Activated B cell treated with CpG ODN at 0.5 μM for 24 hours (primary cell): ENCODE measurements at regions of chr15 and their contacts with region 1.

Region 1: GRCh38 chr15:64153480-64154367 is 2.2 kb downstream of the SNX22 start:
- DNase-seq: peak; percentile 92
- ATAC-seq: peak; percentile 80
- H3K4me3 Mint-ChIP-seq: peak overlapping the region; percentile 86
- H3K27ac Mint-ChIP-seq: peak overlapping the region; percentile 91
- H3K4me1 Mint-ChIP-seq: peaks cover 69% of the 10 kb centered on the region
- H3K27me3 Mint-ChIP-seq: no peaks in the 10 kb centered on the region
- CTCF ChIP-seq: peak; percentile 61

Region 2: DNA sequence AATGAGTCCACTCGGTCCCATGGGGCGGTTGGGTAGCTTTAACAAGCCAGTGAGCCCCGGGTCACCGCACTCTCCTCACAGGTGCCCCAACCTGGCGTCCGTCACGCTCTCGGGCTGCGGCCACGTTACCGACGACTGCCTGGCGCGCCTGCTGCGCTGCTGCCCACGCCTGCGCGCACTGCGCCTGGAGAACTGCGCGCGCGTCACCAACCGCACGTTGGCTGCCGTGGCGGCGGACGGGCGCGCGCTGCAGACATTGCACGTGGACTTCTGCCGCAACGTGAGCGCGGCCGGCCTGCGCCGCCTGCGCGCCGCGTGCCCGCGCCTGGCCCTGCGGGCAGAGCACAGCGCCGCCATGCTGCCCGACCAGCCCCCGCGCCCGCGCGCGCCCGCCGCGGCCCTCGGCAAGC is 553.1 kb before region 1 on chr15:
- CTCF ChIA-PET with region 1: no interaction called
- POLR2A ChIA-PET with region 1: interaction called, 6 read pairs
- intact Hi-C with region 1: loop called (anchors 5 kb)
- DNase-seq: peak; percentile 90
- ATAC-seq: peak; percentile 71
- H3K4me3 Mint-ChIP-seq: peak overlapping the region; percentile 91
- H3K27ac Mint-ChIP-seq: peak overlapping the region; percentile 91
- H3K4me1 Mint-ChIP-seq: peaks cover 75% of the 10 kb centered on the region
- H3K27me3 Mint-ChIP-seq: no peaks in the 10 kb centered on the region
- CTCF ChIP-seq: no peak

Region 3: GRCh38 chr15:63833021-63833696 is 320.6 kb before region 1 on chr15:
- CTCF ChIA-PET with region 1: interaction called, 3 read pairs
- POLR2A ChIA-PET with region 1: no interaction called
- intact Hi-C with region 1: loop called (anchors 5 kb)
- DNase-seq: peak; percentile 44
- ATAC-seq: peak; percentile 43
- H3K4me3 Mint-ChIP-seq: peak overlapping the region; percentile 97
- H3K27ac Mint-ChIP-seq: peak overlapping the region; percentile 74
- H3K4me1 Mint-ChIP-seq: peaks cover 48% of the 10 kb centered on the region
- H3K27me3 Mint-ChIP-seq: no peaks in the 10 kb centered on the region
- CTCF ChIP-seq: no peak

Region 4: GRCh38 chr15:64137226-64138220 is 16.2 kb before region 1 on chr15:
- CTCF ChIA-PET with region 1: interaction called, 28 read pairs
- POLR2A ChIA-PET with region 1: interaction called, 40 read pairs
- intact Hi-C with region 1: loop called (anchors 1 kb)
- DNase-seq: no peak
- ATAC-seq: peak; percentile 93
- H3K4me3 Mint-ChIP-seq: no peak overlapping the region
- H3K27ac Mint-ChIP-seq: no peak overlapping the region
- H3K4me1 Mint-ChIP-seq: peaks cover 17% of the 10 kb centered on the region
- H3K27me3 Mint-ChIP-seq: no peaks in the 10 kb centered on the region
- CTCF ChIP-seq: no peak

Region 5: GRCh38 chr15:64536244-64536836 is 382.6 kb after region 1 on chr15:
- CTCF ChIA-PET with region 1: no interaction called
- POLR2A ChIA-PET with region 1: no interaction called
- intact Hi-C with region 1: no loop called
- DNase-seq: no peak
- ATAC-seq: no peak
- H3K4me3 Mint-ChIP-seq: no peak overlapping the region
- H3K27ac Mint-ChIP-seq: no peak overlapping the region
- H3K4me1 Mint-ChIP-seq: peaks cover 22% of the 10 kb centered on the region
- H3K27me3 Mint-ChIP-seq: no peaks in the 10 kb centered on the region
- CTCF ChIP-seq: no peak

Region 6: DNA sequence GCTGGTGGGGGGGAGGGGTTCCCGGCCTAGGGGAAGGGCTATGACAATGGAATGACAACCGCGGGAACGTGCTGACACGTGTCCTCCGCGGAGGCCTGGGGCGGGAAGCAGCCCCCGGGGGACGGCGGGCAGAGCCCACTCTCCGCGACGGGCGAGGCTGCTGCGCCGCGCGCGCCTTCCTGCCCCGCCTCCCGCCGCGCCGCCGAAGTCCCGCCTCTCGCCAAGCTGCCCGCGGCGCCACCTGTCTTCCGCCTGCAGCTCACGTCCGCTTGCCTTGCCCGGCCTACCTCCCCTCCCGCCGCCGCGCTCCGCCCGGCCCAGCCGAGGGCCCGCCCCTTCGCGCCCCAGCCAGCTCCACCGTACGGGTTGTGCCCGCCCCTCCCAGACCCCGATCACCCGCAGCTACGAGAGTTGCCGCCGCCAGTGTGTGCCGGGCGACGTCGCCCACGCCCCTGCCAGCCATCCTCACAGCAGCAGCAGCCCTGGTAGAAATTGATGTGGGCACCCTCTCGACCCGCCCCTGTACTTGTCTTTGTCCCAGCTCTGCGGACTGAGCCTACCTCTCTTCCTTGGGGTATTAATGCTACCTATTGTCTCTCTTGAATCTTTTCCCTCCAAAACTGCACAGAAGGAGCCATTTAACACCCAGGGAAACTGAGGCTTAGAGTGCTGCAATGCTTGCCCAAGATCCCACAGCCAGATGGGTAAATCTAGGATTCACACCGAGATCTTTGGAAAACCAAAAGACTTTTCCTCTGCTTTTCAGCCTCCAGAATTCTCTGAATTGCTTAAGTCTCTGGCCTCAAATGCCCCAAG is 1133.2 kb after region 1 on chr15 and contains the start of gene PARP16:
- CTCF ChIA-PET with region 1: no interaction called
- POLR2A ChIA-PET with region 1: no interaction called
- intact Hi-C with region 1: loop called (anchors 2 kb)
- DNase-seq: peak; percentile 94
- ATAC-seq: peak; percentile 96
- H3K4me3 Mint-ChIP-seq: peak within 1 kb of the TSS; percentile 85
- H3K27ac Mint-ChIP-seq: peak within 1 kb of the TSS; percentile 90
- H3K4me1 Mint-ChIP-seq: peaks cover 27% of the 10 kb centered on the region
- H3K27me3 Mint-ChIP-seq: no peaks in the 10 kb centered on the region
- CTCF ChIP-seq: no peak
- total RNA-seq, gene PARP16: 11.2 and 11.5 TPM in 2 replicates